SK-N-SH (cell line): ENCODE measurements at regions of chr5 and their contacts with region 1.

Region 1: GRCh38 chr5:148740966-148741742 is 85.3 kb upstream of the ADRB2 start:
- DNase-seq: peak; percentile 39
- H3K4me3 ChIP-seq: no peak overlapping the region
- H3K27ac ChIP-seq: no peak overlapping the region
- H3K4me1 ChIP-seq: no peaks in the 10 kb centered on the region
- H3K27me3 ChIP-seq: no peaks in the 10 kb centered on the region
- CTCF ChIP-seq: peak; percentile 72
- EP300 ChIP-seq: no peak
- RAD21 ChIP-seq: peak; percentile 80

Region 2: GRCh38 chr5:148760945-148761638 is 19.9 kb after region 1 on chr5:
- CTCF ChIA-PET with region 1: interaction called, 11 read pairs
- POLR2A ChIA-PET with region 1: no interaction called
- DNase-seq: no peak
- H3K4me3 ChIP-seq: no peak overlapping the region
- H3K27ac ChIP-seq: no peak overlapping the region
- H3K4me1 ChIP-seq: no peaks in the 10 kb centered on the region
- H3K27me3 ChIP-seq: no peaks in the 10 kb centered on the region
- CTCF ChIP-seq: no peak
- EP300 ChIP-seq: no peak
- RAD21 ChIP-seq: no peak

Region 3: GRCh38 chr5:148957591-148958202 is 216.5 kb after region 1 on chr5:
- CTCF ChIA-PET with region 1: interaction called, 27 read pairs
- POLR2A ChIA-PET with region 1: no interaction called
- DNase-seq: peak; percentile 59
- H3K4me3 ChIP-seq: no peak overlapping the region; a peak in 1 of 4 replicates
- H3K27ac ChIP-seq: no peak overlapping the region
- H3K4me1 ChIP-seq: peaks cover 0 to 3% of the 10 kb centered on the region in 2 experiments; a peak in 1 of 4 replicates
- H3K27me3 ChIP-seq: no peaks in the 10 kb centered on the region
- CTCF ChIP-seq: peak; percentile 90
- EP300 ChIP-seq: no peak
- RAD21 ChIP-seq: peak; percentile 78

Region 4: DNA sequence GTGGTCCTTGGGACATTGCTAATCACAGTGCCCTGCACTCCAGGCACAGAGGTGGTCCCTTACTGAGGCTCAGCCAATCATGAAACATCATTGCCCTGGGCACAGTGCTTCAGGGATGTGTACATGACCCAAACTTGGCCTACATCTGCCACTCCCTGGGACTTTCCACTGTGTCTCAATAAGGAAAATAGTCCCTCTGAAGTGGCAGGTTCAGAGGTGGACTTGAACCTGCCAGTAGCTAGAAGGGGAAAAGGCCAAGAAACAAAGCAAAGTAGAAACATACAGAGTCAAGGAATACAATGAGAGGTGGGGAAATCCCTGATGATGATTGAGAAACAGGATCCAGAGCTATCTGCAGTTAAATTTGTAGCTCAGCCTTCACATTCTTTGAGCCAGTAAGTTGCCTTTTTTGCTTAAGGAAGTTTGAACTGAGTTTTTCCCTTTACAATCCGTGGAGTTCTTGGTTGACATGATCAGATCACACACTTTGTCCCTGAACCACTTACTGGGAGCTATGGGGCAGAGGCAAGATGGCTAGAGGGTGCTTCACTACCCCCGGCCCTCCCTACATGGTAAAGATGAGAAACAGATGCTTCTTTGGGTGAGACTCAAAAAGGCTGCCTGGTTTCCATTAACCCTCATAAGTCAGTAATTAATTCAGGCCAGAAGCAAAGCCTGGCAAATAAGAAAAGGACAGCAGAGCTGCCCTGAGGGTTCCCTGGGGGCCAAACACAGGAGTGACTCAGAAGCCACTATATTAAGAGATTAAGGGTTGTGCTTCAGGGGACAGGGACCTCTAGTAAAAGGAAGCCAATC is 264.1 kb after region 1 on chr5:
- CTCF ChIA-PET with region 1: interaction called, 25 read pairs
- POLR2A ChIA-PET with region 1: no interaction called
- DNase-seq: peak; percentile 70
- H3K4me3 ChIP-seq: no peak overlapping the region
- H3K27ac ChIP-seq: no peak overlapping the region
- H3K4me1 ChIP-seq: peaks cover 7 to 12% of the 10 kb centered on the region in 2 experiments; a peak in 3 of 4 replicates
- H3K27me3 ChIP-seq: no peaks in the 10 kb centered on the region
- CTCF ChIP-seq: no peak
- EP300 ChIP-seq: peak; percentile 80 to 93
- RAD21 ChIP-seq: no peak

Region 5: GRCh38 chr5:149357370-149358293 is 616.5 kb after region 1 on chr5 and contains the start of gene PCYOX1L:
- CTCF ChIA-PET with region 1: no interaction called
- POLR2A ChIA-PET with region 1: no interaction called
- DNase-seq: peak; percentile 98
- H3K4me3 ChIP-seq: peak within 1 kb of the TSS; percentile 62 to 85
- H3K27ac ChIP-seq: peak within 1 kb of the TSS in 1 of 2 experiments; percentile 84; a peak in 2 of 4 replicates
- H3K4me1 ChIP-seq: peaks cover 0 to 12% of the 10 kb centered on the region in 2 experiments; a peak in 1 of 4 replicates
- H3K27me3 ChIP-seq: no peaks in the 10 kb centered on the region
- CTCF ChIP-seq: no peak
- EP300 ChIP-seq: no peak
- RAD21 ChIP-seq: no peak
- polyA plus RNA-seq, gene PCYOX1L: 17.4 and 17.5 TPM in 2 replicates